GM10248 (cell line): ENCODE measurements at regions of chr2 and their contacts with region 1.

Region 1: DNA sequence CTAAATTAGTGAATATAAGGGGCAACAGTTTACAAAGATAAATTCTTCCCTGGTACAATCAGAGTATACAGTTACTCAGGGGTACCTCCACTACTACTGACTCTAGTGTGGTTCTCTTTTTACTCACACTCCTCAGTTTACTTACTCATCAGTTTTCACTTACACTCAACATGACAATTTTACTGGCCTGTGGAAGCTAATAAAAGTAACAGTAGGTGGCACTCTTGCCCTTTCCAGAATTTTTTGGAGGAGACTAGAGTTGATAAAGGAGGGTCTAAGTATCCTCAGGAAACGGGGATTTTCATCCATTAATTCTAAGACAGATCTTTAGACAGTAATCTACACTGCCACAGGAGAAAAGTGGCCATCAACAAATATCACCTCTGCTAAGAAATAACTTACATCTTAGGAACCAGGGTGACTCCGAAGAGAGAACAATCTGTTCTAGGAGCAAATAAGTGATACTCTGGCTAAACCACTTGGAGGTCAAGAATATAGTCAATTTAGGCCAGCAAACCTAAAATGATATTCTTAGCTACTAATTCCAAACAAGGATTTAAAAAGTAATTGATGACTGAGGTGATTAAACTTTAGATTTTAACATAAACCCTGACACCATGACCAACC is 61.3 kb downstream of the ATL2 start:
- DNase-seq: peak; percentile 47
- CTCF ChIP-seq: peak; percentile 60

Region 2: GRCh38 chr2:38377050-38377828 is 61.4 kb after region 1 on chr2 and contains the start of gene ATL2:
- CTCF ChIA-PET with region 1: interaction called, 23 read pairs
- POLR2A ChIA-PET with region 1: interaction called, 3 read pairs
- DNase-seq: peak; percentile 92
- CTCF ChIP-seq: no peak

Region 3: DNA sequence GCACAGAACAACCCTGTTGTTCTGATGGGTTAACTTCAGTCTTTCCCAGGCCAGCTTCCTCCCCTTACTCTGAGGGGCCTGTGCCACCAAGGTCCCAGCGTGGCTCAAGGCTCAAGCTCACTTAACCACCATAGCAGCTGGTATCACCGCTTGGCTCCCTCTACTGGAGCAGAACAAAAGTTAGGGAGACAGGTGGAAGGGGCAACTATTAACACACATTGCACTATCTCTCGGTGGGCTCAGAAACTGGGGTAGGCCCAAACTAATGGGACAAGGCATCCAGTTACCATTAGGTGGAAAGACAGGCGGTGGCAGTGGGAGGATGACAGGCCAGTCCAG is 149.9 kb after region 1 on chr2:
- CTCF ChIA-PET with region 1: interaction called, 25 read pairs
- POLR2A ChIA-PET with region 1: no interaction called
- DNase-seq: peak; percentile 67
- CTCF ChIP-seq: peak; percentile 59

Region 4: DNA sequence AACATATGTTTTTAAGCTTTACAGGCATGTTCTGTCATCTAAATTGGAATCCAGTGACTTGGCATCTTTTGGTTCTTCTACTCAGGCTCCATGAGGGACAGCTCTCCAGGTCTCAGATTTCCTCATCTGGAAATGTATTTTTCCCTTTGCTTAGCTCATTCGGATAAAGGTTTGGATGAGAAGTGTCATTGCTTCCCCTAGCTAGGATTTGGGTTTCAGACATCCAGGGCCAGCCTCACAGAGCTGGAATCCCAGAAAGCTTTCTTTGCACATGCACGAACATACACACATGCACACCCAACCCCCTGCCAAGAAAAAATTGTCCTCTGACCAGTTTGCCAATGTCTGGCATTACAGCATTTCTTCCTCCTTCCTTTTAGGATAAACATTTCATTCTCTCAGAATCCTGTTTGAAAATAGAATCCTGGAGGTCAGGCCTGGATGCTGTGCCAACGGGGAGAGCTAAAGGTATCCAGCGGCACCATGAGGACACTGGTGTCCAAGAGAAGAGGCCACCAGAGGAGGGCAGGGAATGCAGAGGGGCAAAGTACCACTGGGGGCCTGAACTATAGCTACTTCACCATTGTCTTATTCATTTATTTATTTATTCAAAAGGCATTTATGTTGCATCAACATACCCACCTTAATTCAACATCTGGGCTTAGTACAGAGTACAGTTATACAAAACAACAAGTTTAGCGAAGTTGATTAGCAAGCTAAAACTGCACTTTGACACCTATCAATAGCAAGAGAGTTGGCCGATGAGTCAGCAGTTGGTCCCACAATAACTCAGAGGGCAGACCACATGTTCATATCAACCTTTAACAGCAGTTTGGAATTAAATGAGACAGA is 159.1 kb after region 1 on chr2:
- CTCF ChIA-PET with region 1: interaction called, 25 read pairs
- POLR2A ChIA-PET with region 1: no interaction called
- DNase-seq: no peak
- CTCF ChIP-seq: no peak

Region 5: GRCh38 chr2:38626326-38627035 is 310.7 kb after region 1 on chr2:
- CTCF ChIA-PET with region 1: no interaction called
- POLR2A ChIA-PET with region 1: no interaction called
- DNase-seq: no peak
- CTCF ChIP-seq: no peak